Ascending aorta (tissue), 2 donors: ENCODE measurements at regions of chr2 and their contacts with region 1.

Region 1: DNA sequence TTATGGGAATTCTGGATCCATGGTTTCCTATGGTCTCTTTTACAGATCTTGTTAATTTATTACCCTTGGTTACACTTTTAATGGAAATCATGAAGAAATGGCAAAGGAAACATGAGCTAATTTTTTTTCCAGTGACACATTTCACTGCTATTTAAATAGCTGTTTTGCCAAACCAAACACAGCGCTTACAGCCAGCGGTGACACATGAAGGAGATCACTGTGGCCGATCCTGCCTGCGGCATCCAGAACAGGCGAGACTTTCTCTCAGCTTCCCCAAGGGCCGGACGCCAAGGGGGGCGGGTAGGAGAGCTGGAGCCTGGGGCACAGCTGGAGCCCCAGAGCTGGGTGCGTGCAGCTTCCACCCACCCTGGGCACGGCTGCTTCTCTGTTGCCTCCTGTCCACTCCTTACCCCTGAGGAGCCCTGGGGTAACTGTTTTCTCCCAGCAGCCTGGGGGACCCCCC is 81.4 kb upstream of the PKDCC start:
- DNase-seq: peak; percentile 68 to 96
- H3K4me3 ChIP-seq: peak overlapping the region in 1 of 2 donors; percentile 33
- H3K27ac ChIP-seq: peak overlapping the region; percentile 90 to 91
- H3K4me1 ChIP-seq: peaks cover 22 to 55% of the 10 kb centered on the region in 2 donors
- H3K27me3 ChIP-seq: no peaks in the 10 kb centered on the region
- CTCF ChIP-seq: no peak

Region 2: GRCh38 chr2:40150266-40150665 is 1816.2 kb before region 1 on chr2:
- intact Hi-C with region 1: no loop called
- DNase-seq: no peak
- H3K4me3 ChIP-seq: no peak overlapping the region
- H3K27ac ChIP-seq: no peak overlapping the region
- H3K4me1 ChIP-seq: no peaks in the 10 kb centered on the region
- H3K27me3 ChIP-seq: no peaks in the 10 kb centered on the region
- CTCF ChIP-seq: no peak

Region 3: GRCh38 chr2:41814963-41815362 is 151.5 kb before region 1 on chr2:
- intact Hi-C with region 1: no loop called
- DNase-seq: no peak
- H3K4me3 ChIP-seq: no peak overlapping the region
- H3K27ac ChIP-seq: no peak overlapping the region
- H3K4me1 ChIP-seq: no peaks in the 10 kb centered on the region
- H3K27me3 ChIP-seq: no peaks in the 10 kb centered on the region
- CTCF ChIP-seq: no peak

Region 4: DNA sequence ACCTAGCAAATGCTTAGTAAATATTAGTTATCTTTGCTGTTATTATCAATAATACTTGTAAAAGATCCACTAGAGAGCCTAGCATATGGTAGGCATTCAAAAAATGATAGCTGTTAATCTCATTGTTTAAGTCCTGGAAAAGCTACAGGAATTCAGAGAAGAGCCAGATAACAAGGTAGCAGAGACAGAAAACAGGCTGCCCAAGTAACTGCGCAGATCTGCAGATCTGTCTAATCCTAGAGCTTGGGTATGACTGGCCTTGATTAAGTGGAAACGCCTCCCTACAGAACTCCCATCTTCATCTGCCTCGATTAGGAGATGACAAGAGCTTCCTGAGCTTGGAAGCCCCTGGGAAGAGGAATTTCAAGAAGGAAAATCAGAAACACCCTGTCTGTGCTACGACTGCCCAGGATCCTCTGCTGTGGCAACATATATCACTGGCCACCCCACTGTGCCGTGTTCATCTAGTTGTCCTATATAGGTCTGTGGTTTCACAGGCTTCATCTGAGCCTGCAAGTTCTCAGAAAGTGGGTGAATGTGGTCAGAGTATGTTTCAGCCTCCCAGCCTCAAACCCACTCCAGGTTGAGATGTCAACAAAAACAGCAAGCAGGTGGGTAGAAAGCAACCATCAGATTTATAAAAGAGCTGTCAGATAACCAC is 70.1 kb before region 1 on chr2:
- intact Hi-C with region 1: loop called (anchors 2 kb)
- DNase-seq: no peak
- H3K4me3 ChIP-seq: no peak overlapping the region
- H3K27ac ChIP-seq: peak overlapping the region; percentile 71 to 82
- H3K4me1 ChIP-seq: peaks cover 6 to 32% of the 10 kb centered on the region in 2 donors
- H3K27me3 ChIP-seq: no peaks in the 10 kb centered on the region
- CTCF ChIP-seq: no peak

Region 5: DNA sequence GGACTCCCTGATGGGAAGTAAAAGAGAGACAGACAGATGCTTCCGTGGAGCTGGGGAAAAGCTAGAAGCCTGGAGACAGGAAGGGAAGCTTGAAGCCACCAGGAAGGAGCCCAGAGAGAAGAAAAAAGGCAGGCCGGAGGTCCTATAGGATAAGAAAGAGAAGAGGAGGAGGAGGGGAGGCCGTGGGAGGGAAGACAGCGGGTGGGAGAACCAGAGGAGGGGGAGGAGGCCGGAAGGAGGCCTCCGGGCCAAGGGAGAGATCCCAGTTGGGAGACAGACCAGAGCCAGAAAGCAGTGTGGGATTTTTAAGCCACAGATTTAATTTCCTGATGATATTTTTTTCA is 25.7 kb before region 1 on chr2:
- intact Hi-C with region 1: loop called (anchors 2 kb)
- DNase-seq: no peak
- H3K4me3 ChIP-seq: no peak overlapping the region
- H3K27ac ChIP-seq: peak overlapping the region; percentile 54 to 76
- H3K4me1 ChIP-seq: peaks cover 5 to 26% of the 10 kb centered on the region in 2 donors
- H3K27me3 ChIP-seq: no peaks in the 10 kb centered on the region
- CTCF ChIP-seq: no peak

Region 6: DNA sequence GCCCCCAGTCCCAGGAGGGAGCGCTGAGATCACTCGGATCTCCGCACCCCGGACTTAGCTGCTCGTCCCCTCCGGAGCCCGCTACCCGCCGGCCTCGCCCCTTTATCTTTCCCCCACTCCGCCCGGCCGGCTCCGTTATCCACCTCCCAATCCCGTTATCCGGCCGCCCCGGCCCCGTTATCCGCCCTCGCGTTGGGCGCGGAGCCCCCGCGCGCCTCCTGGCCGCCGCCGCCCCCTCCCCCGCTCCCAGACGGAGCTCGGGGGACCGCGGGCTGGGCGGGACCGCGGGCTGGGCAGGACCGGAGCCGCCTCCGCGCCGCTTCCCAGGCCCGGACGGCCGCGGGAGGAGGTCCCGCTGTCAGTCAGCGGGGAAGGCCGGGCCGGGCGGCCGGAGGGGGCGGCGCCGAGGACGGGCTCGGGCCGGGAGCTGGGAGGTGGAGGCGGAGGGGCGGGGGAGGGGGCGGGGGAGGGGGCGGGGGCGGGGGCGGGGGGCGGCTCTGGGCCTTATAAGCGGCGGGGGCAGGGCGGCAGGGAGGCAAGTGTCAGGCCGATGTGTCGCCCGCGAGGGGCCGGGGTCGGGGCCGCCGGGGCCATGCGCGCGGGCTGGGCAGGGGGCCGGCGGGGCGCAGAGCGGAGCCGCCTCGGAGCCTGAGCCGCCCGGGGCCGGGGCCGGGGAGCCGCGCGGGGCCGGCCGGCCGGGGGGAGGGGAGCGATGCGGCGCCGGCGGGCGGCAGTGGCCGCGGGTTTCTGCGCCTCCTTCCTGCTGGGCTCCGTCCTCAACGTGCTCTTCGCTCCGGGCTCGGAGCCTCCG is 81.2 kb after region 1 on chr2 and contains the start of gene PKDCC:
- intact Hi-C with region 1: loop called (anchors 1 kb)
- DNase-seq: peak in 1 of 2 donors; percentile 92
- H3K4me3 ChIP-seq: peak within 1 kb of the TSS; percentile 84 to 97
- H3K27ac ChIP-seq: peak within 1 kb of the TSS; percentile 97 to 98
- H3K4me1 ChIP-seq: peaks cover 3 to 28% of the 10 kb centered on the region in 2 donors
- H3K27me3 ChIP-seq: no peaks in the 10 kb centered on the region
- CTCF ChIP-seq: no peak
- total RNA-seq, gene PKDCC: 210 TPM

Region 7: GRCh38 chr2:42105330-42106256 is 139.1 kb after region 1 on chr2:
- intact Hi-C with region 1: no loop called
- DNase-seq: peak in 1 of 2 donors; percentile 80
- H3K4me3 ChIP-seq: no peak overlapping the region
- H3K27ac ChIP-seq: peak overlapping the region in 1 of 2 donors; percentile 12
- H3K4me1 ChIP-seq: peaks cover 0 to 28% of the 10 kb centered on the region in 2 donors
- H3K27me3 ChIP-seq: no peaks in the 10 kb centered on the region
- CTCF ChIP-seq: no peak

Region 8: DNA sequence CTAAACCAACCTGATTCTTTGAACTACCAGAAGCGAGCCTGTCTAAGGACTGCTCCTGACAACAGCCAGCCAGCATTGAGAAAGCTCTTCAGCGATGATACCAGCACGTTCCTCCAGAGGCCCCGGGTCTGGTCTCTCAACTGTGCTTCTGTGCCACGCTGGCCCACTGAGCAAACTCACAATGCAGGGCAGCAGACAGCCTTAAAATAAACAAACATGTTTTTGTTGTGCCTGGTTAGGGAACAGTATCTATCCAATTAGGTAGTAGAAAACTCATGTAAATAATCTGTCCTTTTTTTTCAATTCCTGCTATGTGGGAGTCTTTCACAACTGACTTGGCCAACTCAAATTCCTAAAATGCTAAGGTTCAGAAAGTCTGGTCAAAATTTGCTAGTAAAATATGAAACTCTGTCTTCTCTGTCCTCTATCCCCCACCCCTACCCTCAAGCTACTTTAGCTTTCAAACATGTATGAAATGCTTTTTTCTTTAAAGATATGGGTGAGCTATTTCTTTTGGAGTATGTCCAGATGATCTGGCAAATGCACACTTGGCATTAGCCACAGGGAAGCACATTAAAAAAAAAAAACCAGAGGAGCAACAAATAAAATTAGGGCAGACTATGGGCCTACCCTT is 181.3 kb after region 1 on chr2:
- intact Hi-C with region 1: no loop called
- DNase-seq: no peak
- H3K4me3 ChIP-seq: no peak overlapping the region
- H3K27ac ChIP-seq: peak overlapping the region; percentile 33 to 50
- H3K4me1 ChIP-seq: peaks cover 0 to 27% of the 10 kb centered on the region in 2 donors
- H3K27me3 ChIP-seq: no peaks in the 10 kb centered on the region
- CTCF ChIP-seq: no peak